ENCODE measurements at regions of chr15 and their contacts with region 1.

Region 1: GRCh38 chr15:28123408-28124023 is 24.4 kb upstream of the OCA2 start:
- DNase-seq: peak in 3 of 5 donors; percentile 20 to 39 (median 21)
- H3K4me3 ChIP-seq: no peak overlapping the region
- H3K4me3 Mint-ChIP-seq: no peak overlapping the region
- H3K27ac ChIP-seq: no peak overlapping the region
- H3K27ac Mint-ChIP-seq: peak overlapping the region in 1 of 7 donors; percentile 88
- H3K4me1 ChIP-seq: no peaks in the 10 kb centered on the region
- H3K4me1 Mint-ChIP-seq: peaks cover 2 to 14% (median 5%) of the 10 kb centered on the region in 4 donors
- H3K27me3 ChIP-seq: no peaks in the 10 kb centered on the region
- H3K27me3 Mint-ChIP-seq: no peaks in the 10 kb centered on the region

Region 2: GRCh38 chr15:27617013-27617412 is 506.5 kb before region 1 on chr15:
- CTCF ChIA-PET with region 1: no interaction called
- POLR2A ChIA-PET with region 1: no interaction called
- intact Hi-C with region 1: no loop called
- DNase-seq: no peak
- H3K4me3 ChIP-seq: no peak overlapping the region
- H3K4me3 Mint-ChIP-seq: no peak overlapping the region
- H3K27ac ChIP-seq: no peak overlapping the region
- H3K27ac Mint-ChIP-seq: no peak overlapping the region
- H3K4me1 ChIP-seq: no peaks in the 10 kb centered on the region
- H3K4me1 Mint-ChIP-seq: no peaks in the 10 kb centered on the region
- H3K27me3 ChIP-seq: no peaks in the 10 kb centered on the region
- H3K27me3 Mint-ChIP-seq: no peaks in the 10 kb centered on the region

Region 3: GRCh38 chr15:27990521-27991515 is 132.7 kb before region 1 on chr15:
- CTCF ChIA-PET with region 1: no interaction called
- POLR2A ChIA-PET with region 1: no interaction called
- intact Hi-C with region 1: no loop called
- DNase-seq: no peak
- H3K4me3 ChIP-seq: no peak overlapping the region
- H3K4me3 Mint-ChIP-seq: no peak overlapping the region
- H3K27ac ChIP-seq: no peak overlapping the region
- H3K27ac Mint-ChIP-seq: no peak overlapping the region
- H3K4me1 ChIP-seq: no peaks in the 10 kb centered on the region
- H3K4me1 Mint-ChIP-seq: no peaks in the 10 kb centered on the region
- H3K27me3 ChIP-seq: no peaks in the 10 kb centered on the region
- H3K27me3 Mint-ChIP-seq: peaks cover 5 to 7% of the 10 kb centered on the region in 2 donors

Region 4: GRCh38 chr15:28086175-28086703 is 37.3 kb before region 1 on chr15:
- CTCF ChIA-PET with region 1: interaction called, 38 read pairs
- POLR2A ChIA-PET with region 1: no interaction called
- intact Hi-C with region 1: loop called (anchors 1 kb)
- DNase-seq: peak; percentile 44 to 61 (median 53)
- H3K4me3 ChIP-seq: no peak overlapping the region
- H3K4me3 Mint-ChIP-seq: no peak overlapping the region
- H3K27ac ChIP-seq: no peak overlapping the region
- H3K27ac Mint-ChIP-seq: no peak overlapping the region
- H3K4me1 ChIP-seq: no peaks in the 10 kb centered on the region
- H3K4me1 Mint-ChIP-seq: peaks cover 0 to 1% (median 0%) of the 10 kb centered on the region in 4 donors
- H3K27me3 ChIP-seq: no peaks in the 10 kb centered on the region
- H3K27me3 Mint-ChIP-seq: peaks cover 22 to 33% of the 10 kb centered on the region in 2 donors

Region 5: DNA sequence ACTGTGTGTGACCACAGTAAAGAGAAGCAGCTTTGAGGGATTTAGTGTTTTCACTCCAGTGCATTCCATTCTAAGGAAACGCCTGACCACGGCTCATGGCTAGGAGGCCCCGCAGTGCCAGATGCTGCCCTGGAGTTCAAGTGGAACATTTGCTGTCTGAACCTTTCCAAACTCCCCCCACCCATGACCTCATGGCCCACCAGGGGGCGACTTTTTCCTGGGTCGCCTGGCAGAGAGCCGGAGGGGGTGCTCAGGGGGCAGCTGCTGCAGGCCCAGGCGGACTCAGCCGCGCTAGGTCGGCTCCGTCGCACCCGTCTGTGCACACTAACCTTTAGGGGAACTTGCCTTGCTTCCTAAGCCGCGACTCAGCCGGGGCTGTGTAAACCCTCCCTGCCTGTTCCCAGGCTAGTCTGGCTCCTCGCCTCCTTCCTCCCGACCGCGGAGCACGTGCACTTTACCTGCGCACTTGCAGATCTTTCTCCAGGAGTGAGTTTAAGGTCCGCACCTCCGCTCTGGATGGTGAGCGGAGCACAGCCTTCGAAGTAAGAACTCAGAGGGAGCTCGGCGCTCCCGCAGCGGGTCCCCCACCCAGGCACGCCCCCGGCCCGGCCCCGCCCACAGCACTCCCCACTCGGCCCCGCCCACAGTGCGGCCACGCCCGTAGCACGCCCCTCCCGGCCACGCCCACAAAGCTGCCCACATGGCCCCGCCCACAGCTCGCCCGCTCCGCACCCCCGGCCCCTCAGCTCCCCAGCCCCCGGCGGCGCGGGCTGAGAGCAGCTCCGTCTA is 24.6 kb before region 1 on chr15 and contains the start of gene OCA2:
- CTCF ChIA-PET with region 1: interaction called, 68 read pairs
- POLR2A ChIA-PET with region 1: interaction called, 7 read pairs
- intact Hi-C with region 1: no loop called
- DNase-seq: peak in 4 of 5 donors; percentile 45 to 55 (median 48)
- H3K4me3 ChIP-seq: no peak within 1 kb of the TSS
- H3K4me3 Mint-ChIP-seq: peak within 1 kb of the TSS; percentile 39 to 90 (median 62)
- H3K27ac ChIP-seq: no peak within 1 kb of the TSS
- H3K27ac Mint-ChIP-seq: peak within 1 kb of the TSS in 2 of 7 donors; percentile 26 to 62
- H3K4me1 ChIP-seq: peaks cover 40% of the 10 kb centered on the region
- H3K4me1 Mint-ChIP-seq: peaks cover 15 to 47% (median 35%) of the 10 kb centered on the region in 4 donors
- H3K27me3 ChIP-seq: peaks cover 33% of the 10 kb centered on the region
- H3K27me3 Mint-ChIP-seq: peaks cover 33 to 47% of the 10 kb centered on the region in 2 donors
- total RNA-seq, gene OCA2: not detected

Region 6: GRCh38 chr15:28147801-28148200 is 24.3 kb after region 1 on chr15:
- CTCF ChIA-PET with region 1: interaction called, 39 read pairs
- POLR2A ChIA-PET with region 1: interaction called, 4 read pairs
- intact Hi-C with region 1: no loop called
- DNase-seq: no peak
- H3K4me3 ChIP-seq: no peak overlapping the region
- H3K4me3 Mint-ChIP-seq: no peak overlapping the region
- H3K27ac ChIP-seq: no peak overlapping the region
- H3K27ac Mint-ChIP-seq: peak overlapping the region in 3 of 7 donors; percentile 4 to 87 (median 46)
- H3K4me1 ChIP-seq: no peaks in the 10 kb centered on the region
- H3K4me1 Mint-ChIP-seq: peaks cover 0 to 65% (median 6%) of the 10 kb centered on the region in 4 donors
- H3K27me3 ChIP-seq: no peaks in the 10 kb centered on the region
- H3K27me3 Mint-ChIP-seq: no peaks in the 10 kb centered on the region

Region 7: DNA sequence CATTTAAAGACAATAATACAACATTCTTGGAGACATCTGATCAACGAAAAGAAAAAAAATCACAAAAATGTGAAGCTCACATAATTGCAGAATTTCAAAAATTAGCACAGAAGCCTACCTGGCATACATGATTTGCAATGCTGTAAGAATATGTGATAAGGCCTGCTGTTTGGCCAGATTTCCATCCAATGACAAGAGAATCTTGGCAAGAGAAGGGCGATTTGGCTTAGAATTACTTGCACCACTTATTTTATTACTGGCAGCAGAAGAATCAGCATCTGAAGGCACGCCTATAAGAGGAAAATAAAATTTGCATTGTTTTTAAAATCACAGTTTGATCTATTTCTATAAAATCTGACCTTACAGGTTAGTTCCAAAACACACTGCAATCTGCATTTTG is 45.9 kb after region 1 on chr15:
- CTCF ChIA-PET with region 1: interaction called, 11 read pairs
- POLR2A ChIA-PET with region 1: no interaction called
- intact Hi-C with region 1: no loop called
- DNase-seq: no peak
- H3K4me3 ChIP-seq: no peak overlapping the region
- H3K4me3 Mint-ChIP-seq: no peak overlapping the region
- H3K27ac ChIP-seq: no peak overlapping the region
- H3K27ac Mint-ChIP-seq: no peak overlapping the region
- H3K4me1 ChIP-seq: no peaks in the 10 kb centered on the region
- H3K4me1 Mint-ChIP-seq: peaks cover 0 to 7% (median 1%) of the 10 kb centered on the region in 4 donors
- H3K27me3 ChIP-seq: no peaks in the 10 kb centered on the region
- H3K27me3 Mint-ChIP-seq: no peaks in the 10 kb centered on the region

Region 8: GRCh38 chr15:28184166-28184565 is 60.6 kb after region 1 on chr15:
- CTCF ChIA-PET with region 1: interaction called, 11 read pairs
- POLR2A ChIA-PET with region 1: no interaction called
- intact Hi-C with region 1: no loop called
- DNase-seq: no peak
- H3K4me3 ChIP-seq: no peak overlapping the region
- H3K4me3 Mint-ChIP-seq: no peak overlapping the region
- H3K27ac ChIP-seq: no peak overlapping the region
- H3K27ac Mint-ChIP-seq: no peak overlapping the region
- H3K4me1 ChIP-seq: no peaks in the 10 kb centered on the region
- H3K4me1 Mint-ChIP-seq: no peaks in the 10 kb centered on the region
- H3K27me3 ChIP-seq: no peaks in the 10 kb centered on the region
- H3K27me3 Mint-ChIP-seq: no peaks in the 10 kb centered on the region

Region 9: DNA sequence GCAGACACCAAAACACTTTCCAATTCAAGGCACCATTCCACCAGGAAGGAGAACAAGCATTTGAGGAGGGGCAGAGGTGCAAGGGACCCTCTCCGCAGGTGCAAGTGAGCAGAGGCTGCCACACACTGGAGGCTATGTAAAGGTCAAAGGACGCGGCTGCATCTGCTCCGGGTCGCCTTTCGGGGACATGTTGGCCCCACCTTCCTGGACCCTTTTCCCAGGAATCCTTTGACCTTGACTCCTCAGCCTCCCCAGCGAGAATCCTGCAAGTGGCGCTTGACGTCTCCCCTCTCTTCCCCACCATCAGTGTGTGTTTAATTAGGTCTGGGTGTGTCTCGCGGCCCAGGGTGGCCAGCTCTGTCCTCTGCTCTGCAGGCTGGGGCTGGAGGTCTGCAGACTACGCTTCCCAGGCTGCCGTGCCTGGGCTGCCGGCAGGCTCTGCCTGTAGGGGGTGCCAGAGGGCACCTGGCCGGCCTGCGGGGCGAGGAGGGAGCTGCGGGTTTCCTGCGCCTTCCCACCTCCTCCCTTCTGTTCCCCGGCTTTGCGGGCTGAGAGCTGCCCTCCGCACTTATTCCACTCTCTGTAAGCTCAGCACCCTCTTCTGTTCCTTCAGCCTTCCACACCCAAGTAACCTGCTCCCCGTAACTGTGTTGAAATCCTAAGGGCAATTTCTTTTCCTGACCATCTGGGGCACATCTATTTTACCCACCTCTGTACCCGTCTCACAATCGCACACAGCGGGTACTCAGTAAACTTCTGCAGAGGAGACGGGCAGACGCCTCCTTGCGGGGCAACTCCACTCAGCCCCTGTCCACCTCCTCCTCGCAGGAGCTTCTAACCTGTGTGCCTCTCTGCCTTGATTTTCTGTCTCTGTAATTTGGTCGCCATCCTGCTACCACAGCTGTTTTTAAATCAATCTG is 1016.3 kb after region 1 on chr15:
- CTCF ChIA-PET with region 1: no interaction called
- POLR2A ChIA-PET with region 1: no interaction called
- intact Hi-C with region 1: no loop called
- DNase-seq: peak in 4 of 5 donors; percentile 35 to 37 (median 36)
- H3K4me3 ChIP-seq: no peak overlapping the region
- H3K4me3 Mint-ChIP-seq: peak overlapping the region in 3 of 8 donors; percentile 27 to 61 (median 34)
- H3K27ac ChIP-seq: no peak overlapping the region
- H3K27ac Mint-ChIP-seq: no peak overlapping the region
- H3K4me1 ChIP-seq: peaks cover 8% of the 10 kb centered on the region
- H3K4me1 Mint-ChIP-seq: peaks cover 6 to 12% (median 7%) of the 10 kb centered on the region in 4 donors
- H3K27me3 ChIP-seq: peaks cover 6% of the 10 kb centered on the region
- H3K27me3 Mint-ChIP-seq: peaks cover 27 to 33% of the 10 kb centered on the region in 2 donors

Region 10: DNA sequence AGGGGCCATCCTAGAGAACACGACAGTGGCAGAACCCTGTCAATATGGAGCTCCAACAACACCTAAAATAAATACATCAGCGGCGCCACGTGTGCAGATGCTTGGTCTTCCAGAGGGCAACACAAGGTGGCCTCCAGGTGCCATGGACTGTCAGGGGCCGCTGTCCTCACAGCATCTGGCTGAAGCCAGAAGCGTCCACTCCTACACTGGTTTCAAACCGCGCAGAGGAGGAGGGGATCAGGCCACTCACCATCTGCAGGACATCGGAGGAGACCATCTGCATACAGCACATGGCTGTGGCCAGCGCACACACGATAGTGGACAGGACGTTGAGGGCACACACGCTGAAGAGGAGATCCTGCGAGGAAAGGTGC is 1028.0 kb after region 1 on chr15:
- CTCF ChIA-PET with region 1: no interaction called
- POLR2A ChIA-PET with region 1: no interaction called
- intact Hi-C with region 1: no loop called
- DNase-seq: no peak
- H3K4me3 ChIP-seq: no peak overlapping the region
- H3K4me3 Mint-ChIP-seq: no peak overlapping the region
- H3K27ac ChIP-seq: no peak overlapping the region
- H3K27ac Mint-ChIP-seq: no peak overlapping the region
- H3K4me1 ChIP-seq: no peaks in the 10 kb centered on the region
- H3K4me1 Mint-ChIP-seq: no peaks in the 10 kb centered on the region
- H3K27me3 ChIP-seq: no peaks in the 10 kb centered on the region
- H3K27me3 Mint-ChIP-seq: peaks cover 5 to 7% of the 10 kb centered on the region in 2 donors

Measured in CD4-positive, alpha-beta memory T cell (primary cell).